ENCODE measurements at regions of chr17 and their contacts with region 1.

Region 1: DNA sequence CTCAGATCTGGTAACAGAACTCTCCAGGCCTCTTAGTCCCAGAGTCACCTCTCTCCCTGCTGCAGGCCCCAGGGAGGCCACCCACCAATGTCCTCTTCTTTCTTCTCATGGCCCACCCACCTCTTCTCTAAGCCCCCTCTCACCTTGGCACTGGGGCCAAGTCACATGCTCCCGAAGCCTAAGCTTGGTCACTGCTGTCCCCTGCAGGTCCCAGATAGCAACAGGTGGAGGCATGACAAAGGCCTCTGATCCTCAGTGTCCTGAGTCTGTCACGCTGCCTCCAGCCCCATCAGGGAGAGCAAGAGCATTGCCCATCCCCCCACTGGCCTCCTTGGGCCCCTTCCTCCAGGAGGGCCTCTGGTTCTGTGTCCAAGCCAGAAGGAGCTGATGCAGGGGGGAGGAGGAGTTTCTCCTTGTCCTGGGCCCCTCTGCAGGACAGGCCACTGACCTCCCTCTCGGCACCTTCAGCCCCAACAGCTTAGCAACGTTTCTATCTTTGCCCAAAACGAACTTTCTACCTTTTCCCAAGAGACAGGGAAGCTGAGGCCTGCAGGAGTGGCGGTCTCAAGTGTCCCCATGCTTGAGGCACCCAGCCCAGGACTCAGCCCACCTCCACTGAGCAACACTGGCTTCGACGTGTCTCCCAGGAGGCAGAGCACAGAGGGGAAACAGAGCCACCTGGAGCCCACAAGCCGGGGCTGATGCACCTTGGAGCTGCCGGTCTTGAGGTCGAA is 8.6 kb downstream of the P2RX1 start:
- DNase-seq: peak in 1 of 6 donors; percentile 54
- ATAC-seq: no peak
- H3K4me3 ChIP-seq: no peak overlapping the region
- H3K27ac ChIP-seq: no peak overlapping the region
- H3K4me1 ChIP-seq: peaks cover 0 to 9% (median 0%) of the 10 kb centered on the region in 3 donors
- H3K27me3 ChIP-seq: no peaks in the 10 kb centered on the region
- CTCF ChIP-seq: peak in 3 of 4 donors; percentile 13 to 29 (median 13)

Region 2: DNA sequence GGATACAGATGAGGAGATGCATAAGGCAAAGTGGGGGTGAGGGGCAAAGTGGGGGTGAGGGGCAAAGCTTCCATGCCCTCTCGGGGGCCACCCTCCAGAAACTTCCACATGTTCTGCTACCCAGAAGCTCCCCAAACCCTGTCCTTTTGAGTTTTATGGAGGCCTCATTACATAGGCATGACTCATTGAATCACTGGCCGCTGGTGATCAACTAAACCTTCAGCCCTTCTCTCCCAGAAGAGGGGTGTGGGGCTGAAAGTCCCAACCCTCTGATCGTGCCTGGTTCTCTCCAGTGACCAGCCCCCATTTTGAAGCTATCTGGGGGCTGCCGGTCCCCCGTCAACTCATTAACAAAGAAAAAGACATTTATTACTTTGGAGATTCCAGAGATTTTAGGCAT is 134.1 kb before region 1 on chr17:
- intact Hi-C with region 1: no loop called
- DNase-seq: peak in 1 of 6 donors; percentile 3
- ATAC-seq: no peak
- H3K4me3 ChIP-seq: no peak overlapping the region
- H3K27ac ChIP-seq: no peak overlapping the region
- H3K4me1 ChIP-seq: no peaks in the 10 kb centered on the region
- H3K27me3 ChIP-seq: no peaks in the 10 kb centered on the region
- CTCF ChIP-seq: no peak

Region 3: DNA sequence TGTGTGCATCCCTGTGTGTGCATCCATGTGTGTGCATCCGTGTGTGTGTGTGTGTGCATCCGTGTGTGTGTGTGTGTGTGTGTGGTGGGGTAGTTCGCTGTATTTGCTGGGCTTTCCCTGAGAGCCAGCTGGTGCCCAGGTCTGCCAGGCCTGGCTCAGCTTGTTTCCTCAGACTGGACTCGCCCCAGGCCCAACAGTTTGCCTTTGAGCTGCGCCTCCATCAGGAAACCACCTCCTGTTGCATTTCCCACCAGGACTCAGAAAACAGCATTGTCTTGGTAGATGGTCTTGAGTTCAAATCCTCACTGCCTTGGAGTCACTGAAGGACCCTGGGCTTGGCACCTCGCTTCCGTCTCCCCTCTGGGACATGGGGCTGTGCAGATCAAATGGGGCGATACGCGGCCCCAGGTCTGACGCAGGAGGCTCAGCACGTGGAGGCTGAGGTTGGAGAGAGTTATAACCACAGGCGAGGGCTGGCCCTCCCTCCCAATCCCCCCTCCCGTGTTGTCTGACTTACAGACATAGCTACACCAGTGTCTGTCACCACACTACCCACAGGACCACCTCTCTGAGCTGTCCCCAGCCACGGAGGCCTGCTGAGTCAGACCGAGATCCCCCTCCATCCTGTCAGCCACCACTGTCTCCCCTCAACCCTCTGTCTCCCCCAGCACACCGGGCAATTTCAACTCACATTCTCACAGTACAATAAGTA is 111.4 kb before region 1 on chr17:
- intact Hi-C with region 1: no loop called
- DNase-seq: no peak
- ATAC-seq: peak in 1 of 4 donors; percentile 30
- H3K4me3 ChIP-seq: no peak overlapping the region
- H3K27ac ChIP-seq: no peak overlapping the region
- H3K4me1 ChIP-seq: no peaks in the 10 kb centered on the region
- H3K27me3 ChIP-seq: no peaks in the 10 kb centered on the region
- CTCF ChIP-seq: no peak

Region 4: GRCh38 chr17:3859940-3860339 is 47.7 kb before region 1 on chr17:
- intact Hi-C with region 1: loop called in 1 of 3 experiments (anchors 5 kb)
- DNase-seq: no peak
- ATAC-seq: no peak
- H3K4me3 ChIP-seq: no peak overlapping the region
- H3K27ac ChIP-seq: no peak overlapping the region
- H3K4me1 ChIP-seq: no peaks in the 10 kb centered on the region
- H3K27me3 ChIP-seq: no peaks in the 10 kb centered on the region
- CTCF ChIP-seq: no peak

Measured in pancreas (tissue), 10 donors.